ENCODE measurements at regions of chr13 and their contacts with region 1.

Region 1: GRCh38 chr13:108155185-108156106 is 59.9 kb downstream of the LIG4 start:
- DNase-seq: peak in 3 of 4 donors; percentile 36 to 62 (median 38)
- ATAC-seq: peak; percentile 77
- H3K4me3 ChIP-seq: no peak overlapping the region
- H3K27ac ChIP-seq: peak overlapping the region; percentile 13 to 69
- H3K4me1 ChIP-seq: no peaks in the 10 kb centered on the region
- H3K27me3 ChIP-seq: no peaks in the 10 kb centered on the region
- CTCF ChIP-seq: peak; percentile 77 to 88

Region 2: GRCh38 chr13:107205303-107206104 is 949.9 kb before region 1 on chr13:
- intact Hi-C with region 1: loop called in 1 of 2 experiments (anchors 10 kb)
- DNase-seq: peak; percentile 53 to 89 (median 66)
- ATAC-seq: peak; percentile 95
- H3K4me3 ChIP-seq: no peak overlapping the region
- H3K27ac ChIP-seq: no peak overlapping the region
- H3K4me1 ChIP-seq: peaks cover 6 to 10% of the 10 kb centered on the region in 2 donors
- H3K27me3 ChIP-seq: no peaks in the 10 kb centered on the region
- CTCF ChIP-seq: peak; percentile 94 to 97

Region 3: DNA sequence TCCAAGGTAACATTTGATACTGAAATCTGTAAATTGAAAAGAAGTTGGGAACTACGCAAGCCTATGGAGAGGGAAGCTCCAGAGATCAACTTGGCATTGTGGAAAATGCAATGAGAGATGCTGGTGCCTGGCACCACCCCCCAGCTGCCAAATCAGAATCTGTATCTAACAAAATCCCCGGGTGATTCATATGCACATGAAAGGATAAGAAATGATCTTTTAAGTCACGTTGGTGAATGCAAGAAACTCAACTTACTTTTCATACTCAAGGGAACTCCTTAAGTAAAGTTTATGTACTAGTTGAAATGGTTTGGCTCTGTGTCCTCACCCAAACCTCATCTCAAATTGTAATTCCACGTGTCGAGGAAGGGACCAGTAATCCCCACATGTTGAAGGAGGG is 315.5 kb after region 1 on chr13:
- intact Hi-C with region 1: no loop called
- DNase-seq: no peak
- ATAC-seq: no peak
- H3K4me3 ChIP-seq: no peak overlapping the region
- H3K27ac ChIP-seq: no peak overlapping the region
- H3K4me1 ChIP-seq: no peaks in the 10 kb centered on the region
- H3K27me3 ChIP-seq: no peaks in the 10 kb centered on the region
- CTCF ChIP-seq: no peak

Measured in left lung (tissue), 14 donors.